Heart left ventricle (tissue), 16 donors: ENCODE measurements at regions of chr7 and their contacts with region 1.

Region 1: DNA sequence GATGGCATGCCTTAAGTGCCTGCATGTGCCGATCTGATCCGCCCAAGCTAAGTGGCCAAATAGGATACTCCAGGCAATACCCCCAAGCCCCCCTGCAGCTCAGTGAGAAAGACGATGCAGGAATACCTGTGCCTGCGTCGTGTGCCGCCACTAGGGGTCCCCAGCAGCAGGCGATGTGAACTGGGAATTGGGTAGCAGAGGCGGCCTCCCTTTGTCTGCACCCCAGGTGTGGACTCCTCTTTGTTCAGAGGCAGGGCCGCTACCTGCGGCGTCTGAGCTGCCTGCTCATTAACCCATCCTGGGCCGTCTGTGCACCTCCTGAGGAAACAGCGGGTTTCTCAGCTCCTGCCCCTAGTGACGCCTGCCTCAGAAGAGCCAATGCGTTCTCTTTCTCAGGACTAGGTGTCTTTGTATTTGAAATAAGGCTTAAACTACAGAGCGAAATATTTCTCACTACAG is 4.8 kb upstream of the CHN2 start:
- DNase-seq: peak; percentile 51 to 77 (median 60)
- ATAC-seq: peak; percentile 56 to 76 (median 66)
- H3K4me3 ChIP-seq: no peak overlapping the region
- H3K27ac ChIP-seq: no peak overlapping the region
- H3K4me1 ChIP-seq: peaks cover 0 to 21% (median 2%) of the 10 kb centered on the region in 12 donors
- H3K27me3 ChIP-seq: peaks cover 0 to 10% (median 0%) of the 10 kb centered on the region in 9 donors
- CTCF ChIP-seq: peak; percentile 69 to 86 (median 78)
- POLR2A ChIP-seq: no peak

Region 2: DNA sequence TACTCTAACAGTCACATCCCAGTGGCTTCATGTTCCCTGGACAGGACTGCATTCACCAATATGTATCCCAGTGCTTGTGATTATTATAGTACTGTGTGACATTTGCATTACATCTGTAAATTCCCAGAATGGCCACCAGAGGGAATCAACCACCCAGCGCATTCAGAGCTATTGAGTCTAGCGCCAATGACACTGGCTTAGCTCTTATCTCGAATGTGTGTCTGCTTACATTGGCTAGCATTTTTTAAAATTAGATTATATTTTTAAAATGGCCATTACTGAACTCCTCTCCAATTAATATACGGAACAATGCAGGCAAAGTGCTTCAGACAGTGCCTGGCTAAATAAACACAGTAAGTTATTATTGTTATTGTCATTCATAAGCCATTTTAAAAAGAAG is 267.9 kb before region 1 on chr7:
- intact Hi-C with region 1: loop called in 6 of 10 experiments (anchors 5 to 10 kb)
- DNase-seq: peak in 3 of 5 donors; percentile 42 to 45 (median 44)
- ATAC-seq: peak; percentile 88 to 95 (median 92)
- H3K4me3 ChIP-seq: no peak overlapping the region
- H3K27ac ChIP-seq: no peak overlapping the region
- H3K4me1 ChIP-seq: peaks cover 0 to 22% (median 12%) of the 10 kb centered on the region in 12 donors
- H3K27me3 ChIP-seq: peaks cover 0 to 8% (median 0%) of the 10 kb centered on the region in 9 donors
- CTCF ChIP-seq: peak; percentile 72 to 94 (median 85)
- POLR2A ChIP-seq: no peak

Region 3: GRCh38 chr7:29105752-29106668 is 83.8 kb before region 1 on chr7:
- intact Hi-C with region 1: loop called in 2 of 10 experiments (anchors 5 kb)
- DNase-seq: peak in 2 of 5 donors; percentile 53
- ATAC-seq: peak; percentile 70 to 81 (median 80)
- H3K4me3 ChIP-seq: no peak overlapping the region
- H3K27ac ChIP-seq: no peak overlapping the region
- H3K4me1 ChIP-seq: peaks cover 0 to 30% (median 5%) of the 10 kb centered on the region in 12 donors
- H3K27me3 ChIP-seq: no peaks in the 10 kb centered on the region
- CTCF ChIP-seq: peak; percentile 68 to 91 (median 85)
- POLR2A ChIP-seq: no peak

Region 4: GRCh38 chr7:29119538-29120199 is 70.1 kb before region 1 on chr7:
- intact Hi-C with region 1: loop called in 2 of 10 experiments (anchors 5 to 10 kb)
- DNase-seq: no peak
- ATAC-seq: no peak
- H3K4me3 ChIP-seq: no peak overlapping the region
- H3K27ac ChIP-seq: no peak overlapping the region
- H3K4me1 ChIP-seq: peaks cover 0 to 38% (median 18%) of the 10 kb centered on the region in 12 donors
- H3K27me3 ChIP-seq: no peaks in the 10 kb centered on the region
- CTCF ChIP-seq: no peak
- POLR2A ChIP-seq: no peak

Region 5: DNA sequence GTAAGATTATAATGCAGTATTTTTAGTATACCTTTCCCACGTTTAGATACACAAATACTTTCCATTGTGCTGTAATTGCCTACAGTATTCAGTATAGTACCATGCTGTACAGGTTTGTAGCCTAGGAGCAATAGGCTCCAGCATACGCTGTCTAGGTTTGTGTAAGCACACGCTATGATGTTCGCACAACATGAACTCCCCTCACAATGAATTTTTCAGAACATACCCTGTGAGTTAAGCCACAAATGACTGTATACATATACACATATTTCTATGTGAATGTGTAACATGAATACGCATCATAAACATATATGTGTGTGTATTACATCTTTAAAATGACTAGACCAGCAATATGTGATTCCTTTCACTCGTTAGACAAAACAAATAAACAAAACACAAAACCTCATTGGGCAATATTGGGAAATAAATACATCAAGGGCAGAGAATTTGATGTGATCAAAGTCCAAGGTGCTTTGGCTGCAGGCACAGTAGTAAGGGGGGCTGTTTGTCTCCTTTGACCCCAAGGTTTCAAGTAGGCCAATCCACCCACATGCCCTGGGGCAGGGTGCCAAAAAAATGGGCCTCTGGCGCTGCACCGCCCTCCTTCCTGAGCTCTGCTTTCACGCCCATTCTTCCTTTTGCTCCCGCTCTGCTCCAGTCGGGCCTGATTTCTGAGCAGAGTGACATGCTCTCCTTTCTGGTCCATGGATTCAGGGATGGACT is 38.7 kb after region 1 on chr7:
- intact Hi-C with region 1: no loop called
- DNase-seq: no peak
- ATAC-seq: no peak
- H3K4me3 ChIP-seq: no peak overlapping the region
- H3K27ac ChIP-seq: no peak overlapping the region
- H3K4me1 ChIP-seq: peaks cover 0 to 20% (median 0%) of the 10 kb centered on the region in 12 donors
- H3K27me3 ChIP-seq: no peaks in the 10 kb centered on the region
- CTCF ChIP-seq: no peak
- POLR2A ChIP-seq: no peak

Region 6: DNA sequence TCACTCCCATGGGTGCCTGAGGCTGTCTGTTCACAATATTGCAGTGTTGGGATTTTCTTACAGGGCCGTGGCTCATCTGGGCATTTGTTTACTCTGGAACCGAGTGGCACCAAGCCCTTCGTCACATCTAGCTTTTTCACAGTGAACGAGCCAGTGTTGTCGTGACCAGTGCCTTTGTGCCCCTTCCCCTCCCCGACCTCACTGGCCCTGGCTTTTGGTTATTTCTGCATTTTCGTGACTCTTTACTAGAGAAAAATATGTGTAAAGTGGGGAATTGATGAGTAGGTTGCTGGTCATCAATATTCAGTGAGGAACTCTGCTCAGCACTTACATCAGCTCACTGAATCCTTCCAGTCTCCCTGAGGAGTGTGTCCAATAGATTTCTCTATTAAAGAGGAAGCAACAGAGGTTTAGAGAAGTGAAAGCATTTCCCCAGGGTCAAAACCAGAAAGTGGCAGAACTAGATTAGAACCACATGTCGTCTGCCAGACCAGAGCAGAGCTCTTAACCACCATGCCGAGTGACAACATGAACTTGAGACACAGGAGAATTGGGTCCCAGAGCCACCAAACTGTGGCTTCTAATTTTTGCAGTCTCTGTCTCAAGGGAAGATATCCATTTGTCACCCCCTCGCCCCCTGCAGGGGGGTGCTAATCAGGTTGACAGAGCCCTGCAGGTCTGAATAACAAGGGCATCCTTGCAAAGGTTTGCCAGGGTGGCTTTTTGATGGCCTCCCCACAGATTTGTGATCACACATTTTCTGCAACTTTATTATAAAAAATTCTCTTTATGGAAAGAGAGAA is 130.1 kb after region 1 on chr7:
- intact Hi-C with region 1: loop called in 1 of 10 experiments (anchors 10 kb)
- DNase-seq: no peak
- ATAC-seq: peak in 3 of 4 donors; percentile 49 to 85 (median 67)
- H3K4me3 ChIP-seq: no peak overlapping the region
- H3K27ac ChIP-seq: peak overlapping the region in 1 of 12 donors; percentile 59
- H3K4me1 ChIP-seq: peaks cover 0 to 24% (median 2%) of the 10 kb centered on the region in 12 donors
- H3K27me3 ChIP-seq: no peaks in the 10 kb centered on the region
- CTCF ChIP-seq: no peak
- POLR2A ChIP-seq: no peak

Region 7: DNA sequence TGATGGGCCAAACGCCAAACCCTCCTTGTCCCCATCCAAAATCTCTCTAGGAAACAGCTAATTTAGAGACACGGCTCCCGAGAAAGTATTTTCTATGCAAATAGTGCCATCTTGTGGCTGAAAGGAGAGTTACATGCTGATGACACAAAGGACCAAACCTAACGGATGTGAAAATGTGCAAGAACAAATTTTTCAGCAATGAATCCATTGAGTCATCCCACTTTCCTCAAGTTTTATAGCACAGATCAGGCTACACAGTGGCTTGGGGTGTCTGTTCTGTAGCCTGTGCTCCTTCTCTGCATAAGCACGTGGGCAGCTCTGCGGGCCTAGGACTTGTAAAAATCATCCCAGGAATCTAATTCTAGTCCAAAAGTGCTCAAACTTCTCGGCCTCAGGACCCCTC is 219.1 kb after region 1 on chr7:
- intact Hi-C with region 1: loop called (anchors 1 to 5 kb)
- DNase-seq: peak in 2 of 5 donors; percentile 45 to 49
- ATAC-seq: peak; percentile 14 to 66 (median 64)
- H3K4me3 ChIP-seq: no peak overlapping the region
- H3K27ac ChIP-seq: no peak overlapping the region
- H3K4me1 ChIP-seq: no peaks in the 10 kb centered on the region
- H3K27me3 ChIP-seq: no peaks in the 10 kb centered on the region
- CTCF ChIP-seq: peak; percentile 71 to 89 (median 83)
- POLR2A ChIP-seq: no peak